Activated CD4-positive, alpha-beta T cell treated with anti-CD3 and anti-CD28 coated beads for 36 hours (primary cell): ENCODE measurements at regions of chr3 and their contacts with region 1.

Region 1: GRCh38 chr3:66472313-66473134 is 28.3 kb downstream of the LRIG1 start:
- DNase-seq: peak; percentile 75
- ATAC-seq: peak; percentile 84
- H3K4me3 Mint-ChIP-seq: peak overlapping the region; percentile 56
- H3K27ac Mint-ChIP-seq: peak overlapping the region; percentile 92
- H3K4me1 Mint-ChIP-seq: peaks cover 67% of the 10 kb centered on the region
- H3K27me3 Mint-ChIP-seq: no peaks in the 10 kb centered on the region

Region 2: GRCh38 chr3:66220602-66221377 is 251.7 kb before region 1 on chr3 and contains the start of gene SLC25A26:
- CTCF ChIA-PET with region 1: no interaction called
- POLR2A ChIA-PET with region 1: no interaction called
- intact Hi-C with region 1: loop called in 1 of 2 experiments (anchors 2 kb)
- DNase-seq: peak; percentile 99
- ATAC-seq: peak; percentile 96
- H3K4me3 Mint-ChIP-seq: peak within 1 kb of the TSS; percentile 86
- H3K27ac Mint-ChIP-seq: peak within 1 kb of the TSS; percentile 92
- H3K4me1 Mint-ChIP-seq: peaks cover 48% of the 10 kb centered on the region
- H3K27me3 Mint-ChIP-seq: no peaks in the 10 kb centered on the region
- total RNA-seq, gene SLC25A26: 14.2 to 22.7 TPM

Region 3: DNA sequence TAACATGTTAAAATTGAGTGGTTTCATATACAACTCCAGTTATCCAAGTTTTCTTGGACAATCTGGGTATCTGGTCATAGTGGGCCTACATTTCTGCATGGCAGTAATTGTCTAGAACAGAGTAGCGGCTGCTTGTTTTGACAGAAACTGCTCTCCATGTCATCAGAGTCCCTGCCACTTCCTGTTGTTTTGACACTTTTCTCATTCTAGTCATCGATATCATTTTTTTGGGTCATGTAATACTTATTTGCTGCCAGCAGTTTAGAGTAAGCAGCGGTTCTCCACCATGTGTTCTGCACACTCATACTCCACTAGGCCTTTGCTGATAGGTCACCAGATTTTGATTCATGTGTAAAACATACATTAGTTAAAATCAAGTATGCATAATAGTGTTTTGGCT is 170.2 kb before region 1 on chr3:
- CTCF ChIA-PET with region 1: interaction called, 6 read pairs
- POLR2A ChIA-PET with region 1: interaction called, 4 read pairs
- intact Hi-C with region 1: loop called in 1 of 2 experiments (anchors 2 kb)
- DNase-seq: peak; percentile 52
- ATAC-seq: peak; percentile 85
- H3K4me3 Mint-ChIP-seq: peak overlapping the region; percentile 36
- H3K27ac Mint-ChIP-seq: peak overlapping the region; percentile 93
- H3K4me1 Mint-ChIP-seq: peaks cover 77% of the 10 kb centered on the region
- H3K27me3 Mint-ChIP-seq: no peaks in the 10 kb centered on the region

Region 4: DNA sequence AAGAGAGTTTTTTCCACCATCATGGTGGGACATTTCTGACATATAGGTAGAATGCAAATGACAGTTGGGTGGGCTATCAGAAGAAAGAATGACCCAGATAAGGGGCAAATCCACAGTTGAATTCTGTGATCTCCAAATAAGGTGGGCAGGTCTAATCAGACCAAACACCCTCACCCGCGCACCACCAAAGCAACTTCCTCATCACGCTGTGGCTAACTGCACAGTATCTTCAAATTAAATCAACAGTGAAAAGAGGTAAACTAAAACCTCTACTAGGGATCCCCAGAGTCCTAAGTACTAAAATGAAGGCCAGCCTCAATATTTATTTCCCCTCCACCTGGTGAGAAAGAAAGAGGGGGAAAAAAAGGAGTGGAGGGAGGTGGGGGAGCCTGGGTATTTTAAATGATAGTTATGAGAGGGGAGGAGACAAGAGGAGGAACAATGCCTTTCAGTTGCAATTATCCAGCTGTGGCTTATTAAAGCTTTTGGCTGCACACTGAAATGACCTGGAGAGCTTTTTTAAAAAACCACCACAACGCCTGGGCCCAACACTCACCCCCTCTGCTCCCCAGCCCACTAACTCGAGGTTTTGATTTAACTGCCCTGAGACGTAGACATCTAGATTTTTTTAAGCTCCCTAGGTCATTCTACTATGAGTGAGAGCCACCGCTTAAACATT is 32.7 kb before region 1 on chr3:
- CTCF ChIA-PET with region 1: no interaction called
- POLR2A ChIA-PET with region 1: no interaction called
- intact Hi-C with region 1: no loop called
- DNase-seq: no peak
- ATAC-seq: no peak
- H3K4me3 Mint-ChIP-seq: no peak overlapping the region
- H3K27ac Mint-ChIP-seq: no peak overlapping the region
- H3K4me1 Mint-ChIP-seq: peaks cover 27% of the 10 kb centered on the region
- H3K27me3 Mint-ChIP-seq: no peaks in the 10 kb centered on the region

Region 5: DNA sequence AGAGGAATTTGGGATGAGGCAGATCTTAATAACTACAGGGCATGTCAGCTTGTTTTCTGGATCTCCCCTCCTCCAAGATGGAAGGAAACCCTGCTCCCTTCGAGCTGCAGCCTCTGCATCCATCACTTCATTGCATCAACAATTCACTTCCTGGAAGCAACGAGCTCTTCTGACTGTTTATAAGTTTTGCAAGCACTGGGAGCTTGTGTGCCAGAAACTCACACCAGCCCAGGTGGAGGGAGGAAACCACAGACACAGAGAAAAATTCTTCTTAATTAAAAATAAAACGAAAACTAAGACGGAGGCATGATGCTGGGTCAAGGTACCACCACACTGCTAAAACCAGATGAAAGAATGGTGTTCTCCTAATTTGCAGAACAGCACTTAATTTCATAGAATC is 17.7 kb after region 1 on chr3:
- CTCF ChIA-PET with region 1: interaction called, 21 read pairs
- POLR2A ChIA-PET with region 1: interaction called, 5 read pairs
- intact Hi-C with region 1: no loop called
- DNase-seq: peak; percentile 34
- ATAC-seq: peak; percentile 45
- H3K4me3 Mint-ChIP-seq: peak overlapping the region; percentile 46
- H3K27ac Mint-ChIP-seq: peak overlapping the region; percentile 90
- H3K4me1 Mint-ChIP-seq: peaks cover 81% of the 10 kb centered on the region
- H3K27me3 Mint-ChIP-seq: no peaks in the 10 kb centered on the region

Region 6: DNA sequence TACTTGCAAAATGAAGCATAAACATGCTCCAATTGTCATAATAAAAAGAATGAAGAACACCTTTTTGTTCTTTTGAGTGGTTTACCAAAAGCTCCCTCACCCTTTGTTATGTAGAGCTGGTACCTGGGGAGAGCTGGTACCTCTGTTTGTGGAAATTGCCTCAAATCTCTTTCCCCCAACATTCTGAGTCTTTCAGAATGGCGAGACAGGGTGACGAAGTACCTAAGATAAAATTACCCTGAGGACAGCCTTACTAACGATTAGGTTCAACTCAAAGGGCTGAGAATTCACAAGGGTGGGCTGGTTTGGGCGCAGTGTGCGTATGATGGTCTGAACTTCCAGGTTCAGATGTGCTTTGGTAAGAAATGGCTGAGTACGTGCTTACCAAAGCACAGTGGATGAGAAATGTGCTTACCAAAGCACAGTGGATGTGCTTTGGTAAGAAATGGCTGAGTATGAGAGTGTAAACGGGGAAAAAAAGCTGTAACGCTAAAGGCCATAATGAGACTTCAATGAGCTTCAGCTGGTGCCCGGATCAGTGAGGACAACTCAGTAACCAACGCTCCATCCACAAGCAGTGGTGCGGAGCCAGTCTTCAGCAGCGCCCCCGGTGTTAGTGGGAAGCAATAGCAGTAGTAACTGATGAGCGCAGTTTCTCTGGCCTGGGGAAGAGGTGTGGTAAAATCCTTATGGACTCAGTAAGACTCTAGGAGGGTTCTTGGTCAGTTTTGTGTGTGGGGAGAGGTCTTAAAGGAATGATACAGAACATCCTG is 100.6 kb after region 1 on chr3:
- CTCF ChIA-PET with region 1: no interaction called
- POLR2A ChIA-PET with region 1: no interaction called
- intact Hi-C with region 1: no loop called
- DNase-seq: peak; percentile 25
- ATAC-seq: no peak
- H3K4me3 Mint-ChIP-seq: no peak overlapping the region
- H3K27ac Mint-ChIP-seq: no peak overlapping the region
- H3K4me1 Mint-ChIP-seq: no peaks in the 10 kb centered on the region
- H3K27me3 Mint-ChIP-seq: no peaks in the 10 kb centered on the region

Region 7: GRCh38 chr3:66998113-66998903 is 525.8 kb after region 1 on chr3 and contains the start of gene KBTBD8:
- CTCF ChIA-PET with region 1: interaction called, 3 read pairs
- POLR2A ChIA-PET with region 1: no interaction called
- intact Hi-C with region 1: loop called in 1 of 2 experiments (anchors 1 kb)
- DNase-seq: peak; percentile 98
- ATAC-seq: peak; percentile 95
- H3K4me3 Mint-ChIP-seq: peak within 1 kb of the TSS; percentile 88
- H3K27ac Mint-ChIP-seq: peak within 1 kb of the TSS; percentile 92
- H3K4me1 Mint-ChIP-seq: peaks cover 30% of the 10 kb centered on the region
- H3K27me3 Mint-ChIP-seq: peaks cover 7% of the 10 kb centered on the region
- total RNA-seq, gene KBTBD8: 8.3 to 9.2 TPM